ENCODE measurements at regions of chr19 and their contacts with region 1.

Region 1: GRCh38 chr19:2706251-2706650 is 3.8 kb upstream of the GNG7 start:
- DNase-seq: no peak
- H3K4me3 ChIP-seq: no peak overlapping the region
- H3K27ac ChIP-seq: no peak overlapping the region
- H3K4me1 ChIP-seq: no peaks in the 10 kb centered on the region
- H3K27me3 ChIP-seq: peaks cover 5% of the 10 kb centered on the region
- CTCF ChIP-seq: no peak

Region 2: GRCh38 chr19:2804156-2805004 is 98.1 kb after region 1 on chr19:
- CTCF ChIA-PET with region 1: no interaction called
- dilution Hi-C with region 1: loop called (anchors 5 kb)
- in situ Hi-C with region 1: no loop called
- intact Hi-C with region 1: no loop called
- DNase-seq: no peak
- H3K4me3 ChIP-seq: no peak overlapping the region
- H3K27ac ChIP-seq: no peak overlapping the region
- H3K4me1 ChIP-seq: no peaks in the 10 kb centered on the region
- H3K27me3 ChIP-seq: no peaks in the 10 kb centered on the region
- CTCF ChIP-seq: no peak